Sigmoid colon (tissue), 7 donors: ENCODE measurements at regions of chr12 and their contacts with region 1.

Region 1: GRCh38 chr12:5988659-5989116 is 43.6 kb upstream of the ANO2 start:
- DNase-seq: peak; percentile 88
- H3K4me3 ChIP-seq: no peak overlapping the region
- H3K27ac ChIP-seq: peak overlapping the region in 3 of 4 donors; percentile 5 to 74 (median 59)
- H3K4me1 ChIP-seq: peaks cover 0 to 20% (median 11%) of the 10 kb centered on the region in 4 donors
- H3K27me3 ChIP-seq: no peaks in the 10 kb centered on the region
- CTCF ChIP-seq: peak; percentile 82 to 95 (median 92)
- EP300 ChIP-seq: no peak
- POLR2A ChIP-seq: no peak

Region 2: DNA sequence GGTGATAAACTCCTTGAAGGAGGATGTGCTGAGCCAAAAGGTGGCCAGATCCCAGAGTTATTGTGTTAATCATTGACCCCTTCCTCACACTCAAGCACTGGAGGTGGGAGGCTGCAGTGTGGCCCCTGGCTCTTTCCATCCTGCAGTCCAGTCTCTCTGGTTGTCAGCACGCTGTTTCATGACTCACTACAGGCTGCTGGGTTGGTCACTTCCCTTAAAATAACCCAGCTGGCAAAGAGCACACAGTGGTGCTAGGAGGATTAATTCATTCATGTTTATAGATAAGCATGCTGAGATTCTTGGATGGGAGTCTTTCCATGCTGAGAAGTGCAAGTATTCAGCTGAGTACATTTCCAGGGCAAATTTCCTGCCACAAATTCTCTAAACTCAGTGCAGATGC is 272.5 kb before region 1 on chr12:
- intact Hi-C with region 1: no loop called
- DNase-seq: no peak
- H3K4me3 ChIP-seq: no peak overlapping the region
- H3K27ac ChIP-seq: peak overlapping the region in 1 of 4 donors; percentile 46
- H3K4me1 ChIP-seq: peaks cover 0 to 33% (median 24%) of the 10 kb centered on the region in 4 donors
- H3K27me3 ChIP-seq: no peaks in the 10 kb centered on the region
- CTCF ChIP-seq: no peak
- EP300 ChIP-seq: no peak
- POLR2A ChIP-seq: no peak

Region 3: GRCh38 chr12:5889381-5890047 is 99.2 kb before region 1 on chr12:
- intact Hi-C with region 1: no loop called
- DNase-seq: no peak
- H3K4me3 ChIP-seq: no peak overlapping the region
- H3K27ac ChIP-seq: no peak overlapping the region
- H3K4me1 ChIP-seq: no peaks in the 10 kb centered on the region
- H3K27me3 ChIP-seq: no peaks in the 10 kb centered on the region
- CTCF ChIP-seq: no peak
- EP300 ChIP-seq: no peak
- POLR2A ChIP-seq: no peak

Region 4: DNA sequence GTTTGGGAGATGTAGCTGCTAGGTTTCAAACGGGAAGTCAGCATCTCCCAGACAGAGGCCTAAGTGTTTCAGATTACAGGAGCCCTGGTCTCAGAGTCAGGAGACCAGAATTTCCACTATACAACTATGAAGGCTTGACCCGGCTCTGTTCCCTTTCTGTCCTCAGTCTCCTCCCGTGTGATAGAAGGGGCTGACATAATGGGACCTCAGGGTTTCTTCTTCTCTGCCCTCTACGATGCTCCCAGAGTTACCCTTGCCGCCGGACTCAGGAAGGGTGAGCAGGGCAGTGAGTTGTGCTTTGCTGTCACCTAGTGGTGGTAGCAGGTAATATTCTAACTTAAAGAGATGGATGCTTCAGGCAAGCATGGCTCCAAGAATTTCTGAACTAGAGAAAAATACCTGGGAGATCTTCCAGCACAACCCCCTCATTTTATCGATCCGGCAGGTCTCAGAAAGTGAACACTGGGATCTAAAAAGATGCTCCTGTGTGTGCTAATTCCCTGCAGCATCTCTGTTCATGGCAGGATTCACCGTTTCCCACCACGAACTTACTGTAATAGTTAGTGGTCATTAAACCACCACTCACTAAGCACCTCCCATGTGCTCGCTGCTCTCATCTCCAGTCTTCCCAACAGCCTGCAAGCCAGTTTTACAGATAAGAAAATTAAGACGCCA is 51.3 kb after region 1 on chr12:
- intact Hi-C with region 1: loop called (anchors 1 kb)
- DNase-seq: peak; percentile 69
- H3K4me3 ChIP-seq: no peak overlapping the region
- H3K27ac ChIP-seq: no peak overlapping the region
- H3K4me1 ChIP-seq: no peaks in the 10 kb centered on the region
- H3K27me3 ChIP-seq: no peaks in the 10 kb centered on the region
- CTCF ChIP-seq: peak; percentile 70 to 93 (median 89)
- EP300 ChIP-seq: no peak
- POLR2A ChIP-seq: no peak

Region 5: DNA sequence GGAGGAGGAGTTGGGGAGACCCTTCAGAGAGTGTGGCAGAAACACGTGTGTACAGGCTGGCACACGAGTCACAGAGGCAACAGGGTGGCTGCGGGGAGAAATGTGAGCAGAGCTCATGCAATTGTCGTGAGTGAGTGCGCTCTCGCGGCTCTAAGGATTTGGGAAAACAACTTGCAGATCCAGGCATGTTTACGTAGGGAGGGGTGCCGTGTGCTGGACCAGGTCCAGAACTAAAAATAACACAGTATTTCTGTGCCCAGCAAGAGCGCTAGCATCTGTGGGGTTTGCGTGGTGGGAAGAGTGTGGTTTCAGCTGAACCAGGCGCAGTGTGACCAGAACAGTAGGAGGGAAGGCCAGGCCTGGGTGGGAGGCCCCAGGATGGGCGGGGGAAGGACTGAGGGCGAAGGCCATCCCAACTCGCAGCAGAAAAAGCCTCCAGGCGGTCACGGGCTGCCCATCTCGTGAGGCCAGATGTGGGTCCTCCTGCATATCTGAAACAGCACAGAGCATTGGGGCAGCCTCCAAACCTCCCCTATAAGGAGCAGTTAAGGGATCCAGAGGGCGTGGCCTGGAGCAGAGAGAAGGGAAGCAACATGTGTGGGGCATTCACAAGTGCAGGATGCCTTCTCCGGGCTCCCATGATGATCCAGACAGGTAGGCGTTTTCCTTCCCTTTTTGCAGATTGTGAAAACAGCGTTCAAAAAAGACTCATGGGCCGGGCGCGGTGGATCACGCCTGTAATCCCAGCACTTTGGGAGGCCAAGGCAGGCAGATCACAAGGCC is 193.6 kb after region 1 on chr12:
- intact Hi-C with region 1: loop called (anchors 5 kb)
- DNase-seq: peak; percentile 91
- H3K4me3 ChIP-seq: peak overlapping the region in 1 of 4 donors; percentile 12
- H3K27ac ChIP-seq: peak overlapping the region; percentile 76 to 88 (median 80)
- H3K4me1 ChIP-seq: peaks cover 0 to 60% (median 45%) of the 10 kb centered on the region in 4 donors
- H3K27me3 ChIP-seq: no peaks in the 10 kb centered on the region
- CTCF ChIP-seq: no peak
- EP300 ChIP-seq: no peak
- POLR2A ChIP-seq: no peak

Region 6: DNA sequence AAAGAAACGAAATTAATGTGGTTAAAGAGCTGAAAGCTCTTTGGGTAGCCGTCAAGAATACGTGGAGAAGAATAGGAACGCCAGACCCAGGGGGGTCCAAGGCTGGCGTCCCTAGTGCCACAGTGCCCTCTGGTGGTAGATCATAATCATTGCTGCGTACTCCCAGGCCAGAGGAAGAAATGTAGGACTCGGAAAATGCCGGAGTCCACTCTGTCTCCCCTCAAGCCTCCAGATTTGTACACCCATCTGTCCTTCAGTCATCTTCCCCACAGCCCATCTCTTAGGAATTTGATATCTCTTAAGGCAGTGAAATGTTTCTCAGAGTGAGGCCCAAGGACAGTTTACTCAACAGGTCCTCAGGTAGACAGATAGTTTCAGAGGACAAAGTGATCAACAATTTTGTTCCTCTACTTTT is 296.4 kb after region 1 on chr12:
- intact Hi-C with region 1: loop called (anchors 2 kb)
- DNase-seq: peak; percentile 83
- H3K4me3 ChIP-seq: no peak overlapping the region
- H3K27ac ChIP-seq: no peak overlapping the region
- H3K4me1 ChIP-seq: peaks cover 0 to 16% (median 6%) of the 10 kb centered on the region in 4 donors
- H3K27me3 ChIP-seq: no peaks in the 10 kb centered on the region
- CTCF ChIP-seq: peak; percentile 82 to 93 (median 90)
- EP300 ChIP-seq: peak in 1 of 4 donors; percentile 7
- POLR2A ChIP-seq: no peak